ENCODE measurements at regions of chr18 and their contacts with region 1.

Region 1: DNA sequence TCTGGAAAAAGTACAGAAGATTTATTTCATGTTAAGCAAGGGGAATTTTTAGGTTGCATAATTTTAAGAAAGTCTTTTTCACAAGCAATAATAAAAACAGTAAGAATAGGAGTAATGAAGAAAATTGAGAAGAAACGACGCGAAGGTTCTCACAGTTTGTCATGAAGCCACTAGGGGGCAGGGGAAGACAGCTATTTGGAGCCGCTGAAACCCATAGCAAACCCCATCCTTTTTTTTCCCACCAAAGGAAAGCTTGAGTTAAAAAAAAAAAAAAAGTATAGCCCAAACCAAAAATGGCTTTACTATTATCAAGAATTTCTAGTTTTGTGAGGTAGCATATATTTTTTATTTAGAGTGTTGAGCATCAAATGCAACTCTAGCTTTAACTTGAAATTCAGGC is 300.9 kb downstream of the PHLPP1 start:
- DNase-seq: peak; percentile 30 to 43
- H3K4me3 ChIP-seq: no peak overlapping the region
- H3K27ac ChIP-seq: no peak overlapping the region
- H3K4me1 ChIP-seq: no peaks in the 10 kb centered on the region
- H3K27me3 ChIP-seq: no peaks in the 10 kb centered on the region
- CTCF ChIP-seq: peak; percentile 91

Region 2: DNA sequence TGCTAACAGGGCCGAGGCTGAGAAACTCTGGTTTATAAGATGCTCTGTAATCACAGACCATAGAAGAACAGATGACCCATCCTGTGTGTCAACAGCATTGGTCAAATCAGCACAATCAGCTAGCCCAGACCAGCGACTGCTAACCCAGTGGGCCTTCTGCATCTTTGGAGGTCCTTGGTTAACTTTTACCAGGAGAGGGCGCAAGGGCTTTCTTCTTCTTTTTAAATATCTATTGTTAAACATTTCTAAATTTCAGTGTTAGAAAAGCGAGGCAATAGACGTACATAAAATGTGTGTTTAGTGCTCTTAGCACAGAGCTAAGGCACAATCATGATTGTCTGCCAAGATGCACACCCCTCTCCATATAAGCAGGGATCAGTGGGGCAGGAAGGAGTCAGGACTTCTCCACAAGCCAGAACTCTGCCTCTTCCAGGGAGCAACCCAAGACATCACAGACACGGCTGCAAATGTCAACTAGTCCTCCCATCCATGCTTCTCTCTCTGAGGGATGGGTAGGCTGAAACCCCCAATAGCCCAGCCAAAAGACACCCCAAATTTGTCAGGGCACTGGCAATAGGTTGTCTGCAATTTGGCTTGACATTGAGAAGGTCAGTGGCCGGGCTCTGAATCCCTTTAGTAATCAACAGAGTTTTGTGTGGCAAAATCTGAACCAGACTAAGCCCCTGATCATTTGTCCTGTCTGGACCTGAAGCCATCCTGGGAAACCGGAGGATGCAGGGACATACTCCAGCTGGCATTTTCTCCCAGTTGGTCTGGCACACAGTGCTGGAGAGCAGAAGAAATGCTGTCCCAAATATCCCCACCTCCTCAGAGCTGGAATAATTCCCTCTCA is 115.1 kb after region 1 on chr18:
- CTCF ChIA-PET with region 1: no interaction called
- POLR2A ChIA-PET with region 1: no interaction called
- intact Hi-C with region 1: loop called (anchors 2 kb)
- DNase-seq: peak in 1 of 2 experiments; percentile 7
- H3K4me3 ChIP-seq: no peak overlapping the region
- H3K27ac ChIP-seq: no peak overlapping the region
- H3K4me1 ChIP-seq: no peaks in the 10 kb centered on the region
- H3K27me3 ChIP-seq: no peaks in the 10 kb centered on the region
- CTCF ChIP-seq: peak; percentile 68

Region 3: DNA sequence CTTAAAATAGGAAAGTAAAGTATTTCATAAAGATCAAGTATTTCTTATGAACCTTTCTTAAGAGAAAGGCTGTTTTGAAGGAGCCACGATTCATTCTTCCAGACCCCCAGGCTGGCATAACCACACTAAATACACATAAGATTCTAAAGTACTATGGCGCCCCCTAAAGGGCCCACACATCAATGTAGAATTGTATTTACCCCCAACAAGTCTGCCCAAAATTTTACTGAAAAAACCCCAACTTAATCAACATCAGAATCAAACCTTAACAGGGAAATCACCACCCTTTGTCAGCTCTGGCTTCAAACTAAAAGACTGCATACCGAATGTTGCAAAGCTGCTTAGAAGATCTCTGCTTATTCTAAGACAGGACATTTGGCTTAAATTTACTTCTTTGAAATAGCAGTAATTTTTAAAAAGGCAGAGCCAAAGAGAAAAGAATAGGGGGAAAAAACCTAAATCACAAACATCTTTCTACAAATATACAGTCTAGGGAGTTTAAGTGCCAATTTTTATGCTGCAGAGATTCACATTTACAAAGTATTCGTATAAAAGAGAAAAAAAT is 323.7 kb after region 1 on chr18:
- CTCF ChIA-PET with region 1: interaction called, 3 read pairs
- POLR2A ChIA-PET with region 1: no interaction called
- intact Hi-C with region 1: loop called (anchors 5 kb)
- DNase-seq: no peak
- H3K4me3 ChIP-seq: no peak overlapping the region
- H3K27ac ChIP-seq: no peak overlapping the region
- H3K4me1 ChIP-seq: peaks cover 21% of the 10 kb centered on the region
- H3K27me3 ChIP-seq: no peaks in the 10 kb centered on the region
- CTCF ChIP-seq: peak; percentile 68

Region 4: GRCh38 chr18:63439334-63439733 is 423.1 kb after region 1 on chr18:
- CTCF ChIA-PET with region 1: interaction called, 5 read pairs
- POLR2A ChIA-PET with region 1: no interaction called
- intact Hi-C with region 1: loop called (anchors 2 kb)
- DNase-seq: peak; percentile 25 to 52
- H3K4me3 ChIP-seq: no peak overlapping the region
- H3K27ac ChIP-seq: no peak overlapping the region
- H3K4me1 ChIP-seq: peaks cover 11% of the 10 kb centered on the region
- H3K27me3 ChIP-seq: no peaks in the 10 kb centered on the region
- CTCF ChIP-seq: peak; percentile 89

Region 5: DNA sequence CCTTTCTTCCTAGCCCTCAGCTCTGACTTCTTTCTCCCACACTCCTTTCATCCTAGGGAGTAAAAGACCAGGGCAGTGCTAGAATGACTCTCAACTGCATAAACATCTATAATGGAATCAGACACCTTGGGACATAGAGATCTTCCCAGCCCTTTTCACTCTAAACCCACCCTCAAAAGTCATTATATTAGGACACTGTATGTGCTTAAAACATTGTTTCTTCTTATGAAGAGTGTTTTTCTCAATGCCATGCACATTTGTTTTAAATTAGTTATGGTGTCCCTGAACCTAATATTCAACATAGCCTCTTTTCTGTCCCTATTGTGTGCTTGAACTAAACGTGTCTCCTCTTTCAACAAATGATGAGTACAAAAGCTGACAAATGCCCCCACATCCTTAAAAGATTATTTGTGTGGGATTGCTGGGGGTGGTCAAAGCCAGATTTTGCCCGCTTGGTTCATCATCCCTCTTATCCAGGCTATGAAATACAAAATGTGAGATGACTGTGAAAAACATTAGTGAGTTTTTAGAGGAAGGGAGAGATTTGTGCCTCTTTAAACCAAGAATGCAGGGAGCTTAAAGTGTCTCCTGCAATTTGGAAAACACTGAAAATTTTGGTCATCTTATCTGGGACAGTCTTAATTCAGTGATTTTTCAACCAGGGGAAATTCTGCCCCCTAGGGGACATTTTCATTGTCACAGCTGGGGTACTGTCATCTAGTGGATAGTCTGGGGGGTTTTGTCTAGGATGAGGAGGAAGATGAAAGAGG is 489.5 kb after region 1 on chr18:
- CTCF ChIA-PET with region 1: no interaction called
- POLR2A ChIA-PET with region 1: no interaction called
- intact Hi-C with region 1: loop called (anchors 5 kb)
- DNase-seq: peak in 1 of 2 experiments; percentile 25
- H3K4me3 ChIP-seq: no peak overlapping the region
- H3K27ac ChIP-seq: no peak overlapping the region
- H3K4me1 ChIP-seq: peaks cover 12% of the 10 kb centered on the region
- H3K27me3 ChIP-seq: no peaks in the 10 kb centered on the region
- CTCF ChIP-seq: peak; percentile 80